ENCODE measurements at regions of chr11 and their contacts with region 1.

Region 1: DNA sequence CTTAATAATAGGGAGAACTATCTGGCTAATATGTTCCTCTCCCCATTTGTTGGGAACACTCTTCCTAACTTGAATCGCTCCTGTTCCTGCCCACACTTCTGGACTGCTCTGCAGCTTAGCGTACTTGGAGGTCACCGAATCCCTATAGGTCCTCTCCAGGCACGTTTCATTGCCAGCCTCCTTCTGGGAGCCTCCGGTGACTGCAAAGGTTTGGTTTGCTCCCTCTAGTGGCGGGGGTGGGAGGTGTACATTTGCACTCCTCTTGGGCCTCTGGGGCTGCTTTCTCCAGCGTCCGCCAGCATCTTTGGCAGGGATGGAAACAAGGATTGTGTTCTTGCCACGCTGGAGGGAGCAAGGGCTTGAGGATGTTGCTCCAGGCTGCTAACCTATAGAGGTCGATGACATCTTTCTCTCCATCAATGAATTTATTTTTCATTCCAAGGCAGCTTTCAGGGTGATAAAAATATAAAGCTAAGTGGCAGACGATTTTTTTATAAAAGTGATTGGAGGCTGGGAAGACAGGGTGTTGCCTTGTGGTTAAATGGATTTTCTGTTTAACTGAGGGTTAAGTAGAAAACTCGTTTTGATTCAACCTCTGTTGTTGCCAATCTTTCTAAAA is 48.7 kb downstream of the TSPAN18 start:
- DNase-seq: peak; percentile 58
- ATAC-seq: peak; percentile 27 to 58

Region 2: GRCh38 chr11:44470854-44471253 is 304.6 kb before region 1 on chr11:
- intact Hi-C with region 1: no loop called
- DNase-seq: no peak
- ATAC-seq: peak; percentile 22 to 34

Region 3: DNA sequence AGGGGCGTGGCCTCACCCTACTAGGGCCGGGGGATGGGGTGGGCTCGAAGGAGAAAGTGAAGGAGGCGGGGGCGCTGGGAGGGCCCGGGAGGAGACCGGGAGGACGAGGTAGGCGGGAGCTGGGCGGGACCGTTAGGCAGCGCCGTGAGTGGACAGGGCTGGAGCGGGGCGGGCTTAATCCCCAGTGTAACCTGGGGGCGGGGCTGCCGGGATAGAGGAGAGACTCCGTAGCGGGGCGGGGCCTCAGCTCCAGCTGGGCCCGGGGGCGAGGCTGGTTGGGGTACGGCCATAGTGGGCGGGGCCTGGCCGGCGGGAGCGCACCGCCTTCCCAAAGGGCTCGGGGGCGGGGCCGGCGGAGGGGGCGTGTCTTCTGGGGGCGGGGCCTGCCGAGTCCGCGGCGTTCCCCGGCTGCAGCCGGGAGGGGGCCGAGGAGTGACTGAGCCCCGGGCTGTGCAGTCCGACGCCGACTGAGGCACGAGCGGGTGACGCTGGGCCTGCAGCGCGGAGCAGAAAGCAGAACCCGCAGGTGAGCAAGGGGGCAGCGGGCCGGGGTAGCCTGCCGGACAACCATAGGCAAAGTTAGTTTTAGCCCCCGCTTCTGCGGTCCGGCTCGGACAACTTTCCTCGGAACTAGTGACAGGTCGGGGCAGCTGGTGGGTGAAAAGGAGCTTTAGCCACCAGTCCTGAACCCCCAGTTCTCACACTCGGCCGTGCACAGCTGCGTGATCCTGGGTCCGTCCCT is 210.1 kb before region 1 on chr11 and contains the start of gene CD82:
- intact Hi-C with region 1: no loop called
- DNase-seq: peak; percentile 100
- ATAC-seq: peak; percentile 96
- total RNA-seq, gene CD82: 22.0 to 35.3 TPM

Region 4: GRCh38 chr11:44814881-44815592 is 39.6 kb after region 1 on chr11:
- intact Hi-C with region 1: loop called in 1 of 2 experiments (anchors 5 kb)
- DNase-seq: no peak
- ATAC-seq: no peak

Region 5: DNA sequence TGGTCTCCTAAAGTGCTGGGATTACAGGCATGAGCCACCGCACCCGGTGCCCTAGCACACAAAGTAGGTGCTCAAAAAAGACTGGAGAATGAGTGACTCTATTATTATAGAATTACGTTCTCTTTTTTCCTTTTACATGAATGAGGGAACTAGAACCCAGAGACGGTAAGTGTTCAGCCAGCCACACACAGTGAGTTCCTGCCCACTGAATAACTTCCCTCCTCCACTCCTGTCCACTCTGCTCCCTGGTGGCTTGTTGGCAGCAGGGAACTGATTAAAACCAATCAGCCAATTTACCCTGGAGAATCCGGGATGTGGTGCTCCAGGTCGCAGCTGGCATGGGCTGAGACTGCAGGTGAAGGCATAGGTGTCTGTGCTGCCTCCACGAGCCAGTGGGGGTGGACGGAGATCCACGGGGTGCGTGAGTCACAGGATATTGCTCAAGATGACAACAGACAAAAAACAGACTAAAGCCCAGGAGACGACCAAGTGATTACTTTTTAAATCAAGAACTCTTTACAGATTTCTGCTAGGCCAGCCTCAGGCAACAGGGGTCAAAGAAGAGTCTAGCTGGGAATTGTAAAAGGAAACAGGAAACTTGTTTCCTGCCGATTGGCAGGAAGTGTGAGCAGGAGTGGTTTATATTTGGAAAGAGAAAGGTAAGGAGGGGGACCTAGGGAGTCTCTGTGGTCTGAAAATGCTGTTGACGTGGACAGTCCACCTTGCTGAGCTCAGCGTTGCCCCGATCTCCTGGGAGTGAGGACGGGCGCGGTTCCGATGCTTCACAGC is 270.4 kb after region 1 on chr11:
- intact Hi-C with region 1: no loop called
- DNase-seq: peak; percentile 64
- ATAC-seq: peak; percentile 32 to 39

Measured in left cardiac atrium (tissue), 4 donors.